Calu3 (cell line): ENCODE measurements at regions of chr19 and their contacts with region 1.

Region 1: GRCh38 chr19:43519436-43520088 is 7.4 kb downstream of the ETHE1 start:
- DNase-seq: peak; percentile 92
- H3K4me3 Mint-ChIP-seq: no peak overlapping the region
- H3K27ac Mint-ChIP-seq: no peak overlapping the region
- H3K4me1 Mint-ChIP-seq: peaks cover 17% of the 10 kb centered on the region
- H3K27me3 Mint-ChIP-seq: no peaks in the 10 kb centered on the region
- CTCF ChIP-seq: peak; percentile 92

Region 2: DNA sequence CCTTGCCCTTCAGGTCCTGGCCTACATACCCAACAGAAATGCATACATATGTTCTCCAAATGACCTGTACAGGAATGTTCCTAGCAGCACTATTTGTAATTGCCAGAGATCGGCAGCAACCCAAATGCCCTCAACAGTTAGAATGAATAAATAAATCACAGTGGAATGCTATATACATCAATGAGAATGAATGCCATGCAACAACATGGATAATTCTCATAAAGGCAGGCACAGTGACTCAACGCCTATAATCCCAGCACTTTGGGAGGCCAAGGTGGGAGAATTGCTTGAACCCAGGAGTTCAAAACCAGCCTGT is 86.2 kb before region 1 on chr19:
- CTCF ChIA-PET with region 1: interaction called, 11 read pairs
- intact Hi-C with region 1: loop called (anchors 1 kb)
- DNase-seq: no peak
- H3K4me3 Mint-ChIP-seq: no peak overlapping the region
- H3K27ac Mint-ChIP-seq: no peak overlapping the region
- H3K4me1 Mint-ChIP-seq: peaks cover 20% of the 10 kb centered on the region
- H3K27me3 Mint-ChIP-seq: no peaks in the 10 kb centered on the region
- CTCF ChIP-seq: no peak

Region 3: GRCh38 chr19:43438291-43439096 is 81.1 kb before region 1 on chr19:
- CTCF ChIA-PET with region 1: interaction called, 11 read pairs
- intact Hi-C with region 1: loop called (anchors 1 kb)
- DNase-seq: no peak
- H3K4me3 Mint-ChIP-seq: no peak overlapping the region
- H3K27ac Mint-ChIP-seq: peak overlapping the region; percentile 35
- H3K4me1 Mint-ChIP-seq: peaks cover 8% of the 10 kb centered on the region
- H3K27me3 Mint-ChIP-seq: no peaks in the 10 kb centered on the region
- CTCF ChIP-seq: no peak

Region 4: GRCh38 chr19:43446746-43447489 is 72.6 kb before region 1 on chr19:
- CTCF ChIA-PET with region 1: interaction called, 113 read pairs
- intact Hi-C with region 1: loop called (anchors 1 kb)
- DNase-seq: peak; percentile 84
- H3K4me3 Mint-ChIP-seq: no peak overlapping the region
- H3K27ac Mint-ChIP-seq: no peak overlapping the region
- H3K4me1 Mint-ChIP-seq: peaks cover 9% of the 10 kb centered on the region
- H3K27me3 Mint-ChIP-seq: no peaks in the 10 kb centered on the region
- CTCF ChIP-seq: peak; percentile 97

Region 5: GRCh38 chr19:43503501-43504425 is 15.8 kb before region 1 on chr19:
- CTCF ChIA-PET with region 1: interaction called, 20 read pairs
- intact Hi-C with region 1: no loop called
- DNase-seq: peak; percentile 99
- H3K4me3 Mint-ChIP-seq: peak overlapping the region; percentile 97
- H3K27ac Mint-ChIP-seq: peak overlapping the region; percentile 24
- H3K4me1 Mint-ChIP-seq: peaks cover 32% of the 10 kb centered on the region
- H3K27me3 Mint-ChIP-seq: no peaks in the 10 kb centered on the region
- CTCF ChIP-seq: no peak

Region 6: GRCh38 chr19:43532962-43533545 is 13.5 kb after region 1 on chr19 and contains the start of gene ZNF575:
- CTCF ChIA-PET with region 1: interaction called, 11 read pairs
- intact Hi-C with region 1: no loop called
- DNase-seq: peak; percentile 96
- H3K4me3 Mint-ChIP-seq: peak within 1 kb of the TSS; percentile 79
- H3K27ac Mint-ChIP-seq: peak within 1 kb of the TSS; percentile 68
- H3K4me1 Mint-ChIP-seq: no peaks in the 10 kb centered on the region
- H3K27me3 Mint-ChIP-seq: no peaks in the 10 kb centered on the region
- CTCF ChIP-seq: no peak
- total RNA-seq, gene ZNF575: 2.2 and 2.8 TPM in 2 replicates